Common myeloid progenitor, CD34-positive (primary cell): ENCODE measurements at regions of chr3 and their contacts with region 1.

Region 1: DNA sequence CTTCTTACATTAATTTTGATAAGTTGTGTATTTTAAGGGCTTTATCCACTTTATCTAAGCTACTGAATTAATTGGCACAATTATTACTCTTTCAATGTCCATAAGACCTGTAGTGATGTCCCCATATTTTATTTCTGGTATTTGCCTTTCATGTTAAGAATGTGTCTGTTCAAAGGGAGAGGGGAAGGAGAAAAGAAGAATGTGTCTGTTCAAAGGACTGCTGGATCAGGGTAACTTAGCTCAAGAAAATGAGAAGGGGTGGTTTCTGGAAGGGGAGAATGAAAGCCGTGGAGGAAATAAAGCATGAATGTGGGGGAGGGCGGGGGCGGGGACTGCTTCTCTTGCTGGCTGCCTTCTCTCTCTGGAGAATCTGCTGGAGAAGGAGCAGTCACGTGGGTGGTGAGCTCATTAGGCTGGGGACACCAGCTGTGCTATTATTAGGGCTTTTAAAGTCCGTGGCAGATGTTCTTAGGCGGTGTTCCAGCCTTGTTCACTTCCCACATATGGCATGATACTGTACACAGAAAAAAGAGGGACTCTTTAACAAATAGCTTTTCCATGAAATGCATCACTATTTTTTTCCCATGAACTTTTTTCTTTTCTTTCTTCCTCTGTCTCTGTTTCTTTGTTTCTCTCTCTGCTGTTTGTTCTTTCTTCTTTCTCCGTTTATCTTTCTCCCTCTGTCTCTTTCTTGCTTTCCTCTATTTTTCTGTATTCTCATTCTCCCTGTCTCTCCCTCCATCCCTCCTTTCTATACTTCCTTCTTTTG is 63.7 kb upstream of the ULK4 start:
- DNase-seq: peak; percentile 48 to 83 (median 78)
- H3K4me3 ChIP-seq: peak overlapping the region in 6 of 7 experiments; percentile 27 to 65 (median 52)
- H3K27ac ChIP-seq: peak overlapping the region; percentile 35 to 80
- H3K4me1 ChIP-seq: peaks cover 22 to 40% (median 30%) of the 10 kb centered on the region in 4 experiments
- H3K27me3 ChIP-seq: no peaks in the 10 kb centered on the region

Region 2: GRCh38 chr3:41893977-41894376 is 131.6 kb before region 1 on chr3:
- CTCF ChIA-PET with region 1: no interaction called
- POLR2A ChIA-PET with region 1: no interaction called
- DNase-seq: peak; percentile 42 to 75 (median 66)
- H3K4me3 ChIP-seq: no peak overlapping the region
- H3K27ac ChIP-seq: no peak overlapping the region
- H3K4me1 ChIP-seq: no peaks in the 10 kb centered on the region
- H3K27me3 ChIP-seq: no peaks in the 10 kb centered on the region

Region 3: DNA sequence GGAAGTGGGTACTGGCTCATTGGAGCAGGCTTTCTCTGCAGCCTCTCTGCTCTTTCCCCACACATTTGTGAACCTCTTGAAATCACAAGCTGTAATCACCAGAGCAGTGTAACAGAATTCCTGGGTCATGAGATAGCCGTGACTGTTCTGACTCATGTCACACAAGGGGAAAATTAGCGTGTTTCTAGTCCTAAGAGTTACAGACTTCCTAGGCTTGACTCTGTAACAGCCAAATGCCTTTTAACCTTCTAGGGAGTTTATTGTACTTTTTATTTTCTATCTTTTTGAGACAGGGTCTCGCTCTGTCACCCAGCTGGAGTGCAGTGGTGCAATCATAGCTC is 10.9 kb after region 1 on chr3:
- CTCF ChIA-PET with region 1: interaction called, 10 read pairs
- POLR2A ChIA-PET with region 1: no interaction called
- DNase-seq: no peak
- H3K4me3 ChIP-seq: no peak overlapping the region
- H3K27ac ChIP-seq: no peak overlapping the region
- H3K4me1 ChIP-seq: peaks cover 0 to 19% (median 8%) of the 10 kb centered on the region in 4 experiments
- H3K27me3 ChIP-seq: no peaks in the 10 kb centered on the region

Region 4: DNA sequence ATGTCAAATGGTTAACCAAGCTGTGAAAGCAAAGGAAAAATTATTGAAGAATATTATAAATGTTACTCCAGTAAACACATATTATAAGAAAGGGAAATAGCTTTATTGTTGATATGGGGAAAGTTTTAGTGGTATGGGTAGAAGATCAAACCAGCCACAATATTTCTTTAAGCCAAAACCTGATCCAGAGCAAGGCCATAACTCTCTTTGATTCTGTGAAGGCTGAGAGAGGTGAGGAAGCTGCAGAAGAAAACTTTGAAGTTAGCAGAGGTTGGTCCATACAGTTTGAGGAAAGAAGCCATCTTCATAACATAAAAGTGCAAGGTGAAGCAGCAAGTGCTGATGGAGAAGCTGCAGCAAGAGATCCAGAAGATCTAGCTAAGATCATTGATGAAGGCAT is 330.1 kb after region 1 on chr3:
- CTCF ChIA-PET with region 1: no interaction called
- POLR2A ChIA-PET with region 1: no interaction called
- DNase-seq: no peak
- H3K4me3 ChIP-seq: no peak overlapping the region
- H3K27ac ChIP-seq: no peak overlapping the region
- H3K4me1 ChIP-seq: no peaks in the 10 kb centered on the region
- H3K27me3 ChIP-seq: peaks cover 0 to 5% (median 0%) of the 10 kb centered on the region in 5 experiments